Activated T-helper 2 cell treated with anti-CD3 and anti-CD28 coated beads, Interferon-gamma antibody, Interleukin-2, Interleukin-4, amounts not matched to agents 10 μg/mL and 5 μg/mL and 100 μg/mL, durations not matched to agents 14 hours and 24 hours and 36 hours (primary cell): ENCODE measurements at regions of chr15 and their contacts with region 1.

Region 1: GRCh38 chr15:71730277-71731144 is 79.8 kb upstream of the NR2E3 start:
- DNase-seq: no peak
- H3K4me3 Mint-ChIP-seq: no peak overlapping the region
- H3K27ac Mint-ChIP-seq: no peak overlapping the region
- H3K4me1 Mint-ChIP-seq: no peaks in the 10 kb centered on the region
- H3K27me3 Mint-ChIP-seq: peaks cover 7% of the 10 kb centered on the region

Region 2: DNA sequence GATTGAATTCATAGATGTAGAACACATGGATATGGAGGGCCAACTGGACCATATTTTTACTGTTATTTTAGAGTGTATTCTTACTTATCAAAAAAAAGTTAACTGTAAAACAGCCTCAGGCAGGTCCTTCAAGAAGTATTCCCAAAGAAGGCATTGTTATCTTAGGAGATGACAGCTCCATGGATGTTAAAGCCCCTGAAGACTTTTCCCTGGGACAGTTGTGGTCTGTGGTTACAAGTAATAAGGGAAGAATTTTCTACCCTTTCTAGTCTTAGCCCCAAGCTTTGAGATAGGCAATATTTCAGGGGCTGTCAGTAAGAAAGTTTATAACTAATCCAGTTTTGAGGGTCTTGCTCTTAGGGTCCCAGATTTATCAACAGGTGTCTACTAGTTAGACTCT is 775.4 kb before region 1 on chr15:
- intact Hi-C with region 1: no loop called
- DNase-seq: no peak
- H3K4me3 Mint-ChIP-seq: no peak overlapping the region
- H3K27ac Mint-ChIP-seq: no peak overlapping the region
- H3K4me1 Mint-ChIP-seq: no peaks in the 10 kb centered on the region
- H3K27me3 Mint-ChIP-seq: peaks cover 9% of the 10 kb centered on the region

Region 3: GRCh38 chr15:71448688-71449114 is 281.8 kb before region 1 on chr15:
- intact Hi-C with region 1: loop called (anchors 10 kb)
- DNase-seq: no peak
- H3K4me3 Mint-ChIP-seq: no peak overlapping the region
- H3K27ac Mint-ChIP-seq: no peak overlapping the region
- H3K4me1 Mint-ChIP-seq: no peaks in the 10 kb centered on the region
- H3K27me3 Mint-ChIP-seq: no peaks in the 10 kb centered on the region

Region 4: DNA sequence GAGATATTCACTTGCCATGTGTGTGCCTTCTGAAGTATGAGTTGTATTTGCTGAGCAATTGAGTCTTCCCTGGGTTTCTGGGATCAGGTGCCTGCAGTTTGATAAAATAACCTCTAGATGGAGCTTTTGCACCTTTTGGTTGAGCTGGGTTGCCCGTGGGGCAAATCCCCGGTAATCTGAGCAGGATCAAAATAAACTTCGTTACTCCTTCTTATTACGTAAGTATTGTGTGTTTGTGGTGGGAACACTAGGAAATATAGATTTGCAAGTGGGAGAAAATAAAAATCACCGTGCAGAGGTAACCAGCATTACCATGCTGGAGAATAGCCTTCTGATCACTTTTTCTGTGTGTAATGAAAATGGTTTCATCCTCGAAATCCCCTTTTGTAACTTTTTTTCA is 197.5 kb before region 1 on chr15:
- intact Hi-C with region 1: loop called (anchors 1 kb)
- DNase-seq: no peak
- H3K4me3 Mint-ChIP-seq: no peak overlapping the region
- H3K27ac Mint-ChIP-seq: no peak overlapping the region
- H3K4me1 Mint-ChIP-seq: no peaks in the 10 kb centered on the region
- H3K27me3 Mint-ChIP-seq: peaks cover 23% of the 10 kb centered on the region

Region 5: GRCh38 chr15:71575474-71576045 is 155.0 kb before region 1 on chr15:
- intact Hi-C with region 1: loop called (anchors 5 kb)
- DNase-seq: no peak
- H3K4me3 Mint-ChIP-seq: no peak overlapping the region
- H3K27ac Mint-ChIP-seq: no peak overlapping the region
- H3K4me1 Mint-ChIP-seq: no peaks in the 10 kb centered on the region
- H3K27me3 Mint-ChIP-seq: peaks cover 13% of the 10 kb centered on the region